Activated T-helper 1 cell treated with anti-CD3 and anti-CD28 coated beads, Interleukin-12 subunit alpha, Interleukin-12 subunit beta, Interleukin-2, Interleukin-4 antibody, amounts not matched to agents 30 ng/mL and 10 ng/mL and 1 ng/mL, durations not matched to agents 14 hours and 24 hours and 36 hours (primary cell): ENCODE measurements at regions of chr1 and their contacts with region 1.

Region 1: GRCh38 chr1:43171876-43172526 is at the starts of genes CFAP57 and EBNA1BP2:
- DNase-seq: peak; percentile 89
- H3K4me3 Mint-ChIP-seq: peak within 1 kb of the TSS; percentile 96
- H3K27ac Mint-ChIP-seq: peak within 1 kb of the TSS; percentile 86
- H3K4me1 Mint-ChIP-seq: peaks cover 16% of the 10 kb centered on the region
- H3K27me3 Mint-ChIP-seq: peaks cover 20% of the 10 kb centered on the region
- total RNA-seq, gene CFAP57: not detected in 2 replicates
- total RNA-seq, gene EBNA1BP2: 126 and 132 TPM in 2 replicates

Region 2: GRCh38 chr1:42657971-42658879 is 513.8 kb before region 1 on chr1 and contains the start of gene PPIH:
- intact Hi-C with region 1: loop called (anchors 1 kb)
- DNase-seq: peak; percentile 94
- H3K4me3 Mint-ChIP-seq: peak within 1 kb of the TSS; percentile 99
- H3K27ac Mint-ChIP-seq: peak within 1 kb of the TSS; percentile 96
- H3K4me1 Mint-ChIP-seq: peaks cover 46% of the 10 kb centered on the region
- H3K27me3 Mint-ChIP-seq: peaks cover 3% of the 10 kb centered on the region
- total RNA-seq, gene PPIH: 89.7 and 94.6 TPM in 2 replicates

Region 3: DNA sequence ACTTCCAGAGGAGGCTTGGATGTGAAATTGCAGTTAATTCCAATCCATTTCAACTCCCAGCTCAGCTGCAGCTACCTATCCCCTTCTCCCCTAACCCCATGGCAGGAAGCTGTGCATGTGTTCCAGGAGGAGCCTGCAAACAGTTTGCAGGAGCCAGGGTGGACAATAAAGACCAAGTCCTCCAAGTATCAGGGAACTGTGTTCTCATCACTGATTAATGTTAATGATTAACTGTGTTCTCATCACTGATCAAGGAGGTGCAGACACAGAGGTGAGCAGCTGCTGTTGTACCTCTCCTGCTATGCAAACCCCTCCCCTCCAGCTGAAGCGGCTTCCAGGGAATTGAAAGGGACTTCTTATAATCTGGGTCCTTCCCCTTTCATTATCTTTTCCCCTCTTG is 451.1 kb before region 1 on chr1:
- intact Hi-C with region 1: no loop called
- DNase-seq: no peak
- H3K4me3 Mint-ChIP-seq: no peak overlapping the region
- H3K27ac Mint-ChIP-seq: no peak overlapping the region
- H3K4me1 Mint-ChIP-seq: peaks cover 6% of the 10 kb centered on the region
- H3K27me3 Mint-ChIP-seq: no peaks in the 10 kb centered on the region

Region 4: GRCh38 chr1:42924082-42924850 is 247.7 kb before region 1 on chr1:
- intact Hi-C with region 1: loop called (anchors 1 kb)
- DNase-seq: peak; percentile 91
- H3K4me3 Mint-ChIP-seq: peak overlapping the region; percentile 90
- H3K27ac Mint-ChIP-seq: peak overlapping the region; percentile 96
- H3K4me1 Mint-ChIP-seq: peaks cover 50% of the 10 kb centered on the region
- H3K27me3 Mint-ChIP-seq: no peaks in the 10 kb centered on the region

Region 5: GRCh38 chr1:43367904-43368645 is 196.1 kb after region 1 on chr1 and contains the start of gene ELOVL1:
- intact Hi-C with region 1: loop called (anchors 1 kb)
- DNase-seq: peak; percentile 85
- H3K4me3 Mint-ChIP-seq: peak within 1 kb of the TSS; percentile 92
- H3K27ac Mint-ChIP-seq: peak within 1 kb of the TSS; percentile 86
- H3K4me1 Mint-ChIP-seq: peaks cover 43% of the 10 kb centered on the region
- H3K27me3 Mint-ChIP-seq: no peaks in the 10 kb centered on the region
- total RNA-seq, gene ELOVL1: 81.8 and 85.7 TPM in 2 replicates

Region 6: GRCh38 chr1:43650310-43651085 is 478.5 kb after region 1 on chr1:
- intact Hi-C with region 1: loop called (anchors 2 kb)
- DNase-seq: peak; percentile 89
- H3K4me3 Mint-ChIP-seq: peak overlapping the region; percentile 98
- H3K27ac Mint-ChIP-seq: peak overlapping the region; percentile 98
- H3K4me1 Mint-ChIP-seq: peaks cover 27% of the 10 kb centered on the region
- H3K27me3 Mint-ChIP-seq: peaks cover under 1% of the 10 kb centered on the region

Region 7: GRCh38 chr1:44631647-44632539 is 1459.9 kb after region 1 on chr1:
- intact Hi-C with region 1: loop called (anchors 2 kb)
- DNase-seq: peak; percentile 86
- H3K4me3 Mint-ChIP-seq: peak overlapping the region; percentile 91
- H3K27ac Mint-ChIP-seq: peak overlapping the region; percentile 97
- H3K4me1 Mint-ChIP-seq: peaks cover 40% of the 10 kb centered on the region
- H3K27me3 Mint-ChIP-seq: peaks cover 2% of the 10 kb centered on the region